MCF 10A (cell line): ENCODE measurements at regions of chr10 and their contacts with region 1.

Region 1: DNA sequence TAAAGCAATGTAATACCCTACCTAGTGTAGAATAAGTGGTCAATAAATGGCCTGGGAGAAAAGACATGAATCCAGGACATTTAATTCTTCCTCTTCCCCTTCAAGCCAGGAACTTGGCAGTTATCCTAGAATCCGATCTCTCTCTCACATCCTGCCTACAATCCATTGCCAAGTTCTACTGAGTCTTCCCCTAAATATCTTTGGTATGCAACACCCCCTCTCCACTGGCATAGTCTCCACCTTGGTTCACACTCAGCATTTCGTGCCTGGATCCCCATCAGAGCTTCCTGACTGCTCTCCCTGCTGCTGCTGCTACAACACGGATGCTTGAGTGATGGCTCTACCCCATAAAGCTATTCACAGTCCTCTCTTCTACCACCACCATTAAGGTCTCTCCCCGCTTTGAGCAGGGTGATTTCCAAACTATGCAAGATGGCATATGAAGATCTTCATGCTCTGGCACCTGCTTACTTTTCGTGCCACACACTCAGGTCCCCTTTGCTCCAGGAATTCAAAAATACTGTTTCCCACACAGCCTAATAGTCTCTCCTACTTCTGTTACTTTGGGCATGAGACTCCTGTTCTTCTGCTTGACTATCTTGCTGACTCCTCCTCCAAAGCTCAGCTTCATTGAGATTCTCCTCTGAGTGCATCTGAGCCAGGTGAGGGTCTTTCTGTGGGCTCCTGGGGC is 4.8 kb downstream of the ANK3 start:
- DNase-seq: peak; percentile 97
- H3K4me3 Mint-ChIP-seq: peak overlapping the region; percentile 20
- H3K27ac Mint-ChIP-seq: peak overlapping the region; percentile 18
- H3K4me1 Mint-ChIP-seq: peaks cover 28% of the 10 kb centered on the region
- H3K27me3 Mint-ChIP-seq: no peaks in the 10 kb centered on the region
- CTCF ChIP-seq: no peak

Region 2: DNA sequence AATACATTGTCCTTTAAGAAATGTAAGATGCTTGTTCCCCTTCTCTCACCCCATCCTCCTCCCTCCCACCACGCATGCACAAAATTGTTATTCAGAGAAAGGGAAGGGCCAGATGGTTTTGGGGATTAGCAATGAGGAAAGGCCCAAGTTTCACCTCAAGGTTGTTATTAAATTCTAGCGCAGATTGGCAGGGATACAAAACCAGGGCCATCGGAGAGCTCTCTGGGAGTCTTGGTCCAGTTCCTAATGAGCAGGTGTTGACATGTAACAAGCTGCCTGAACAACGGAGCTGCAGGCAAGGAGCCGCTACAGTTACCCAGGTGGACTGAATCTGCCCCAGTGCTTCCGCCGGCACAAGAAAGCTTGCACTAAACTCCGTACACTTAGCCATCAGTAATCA is 14.5 kb after region 1 on chr10:
- CTCF ChIA-PET with region 1: interaction called, 3 read pairs
- POLR2A ChIA-PET with region 1: interaction called, 13 read pairs
- intact Hi-C with region 1: no loop called
- DNase-seq: no peak
- H3K4me3 Mint-ChIP-seq: no peak overlapping the region
- H3K27ac Mint-ChIP-seq: no peak overlapping the region
- H3K4me1 Mint-ChIP-seq: peaks cover 13% of the 10 kb centered on the region
- H3K27me3 Mint-ChIP-seq: no peaks in the 10 kb centered on the region
- CTCF ChIP-seq: no peak

Region 3: GRCh38 chr10:60414805-60415585 is 30.1 kb after region 1 on chr10:
- CTCF ChIA-PET with region 1: interaction called, 3 read pairs
- POLR2A ChIA-PET with region 1: interaction called, 5 read pairs
- intact Hi-C with region 1: loop called (anchors 2 kb)
- DNase-seq: peak; percentile 68
- H3K4me3 Mint-ChIP-seq: peak overlapping the region; percentile 7
- H3K27ac Mint-ChIP-seq: peak overlapping the region; percentile 22
- H3K4me1 Mint-ChIP-seq: peaks cover 37% of the 10 kb centered on the region
- H3K27me3 Mint-ChIP-seq: no peaks in the 10 kb centered on the region
- CTCF ChIP-seq: no peak